Dorsolateral prefrontal cortex (tissue), 120 donors: ENCODE measurements at regions of chr2 and their contacts with region 1.

Region 1: DNA sequence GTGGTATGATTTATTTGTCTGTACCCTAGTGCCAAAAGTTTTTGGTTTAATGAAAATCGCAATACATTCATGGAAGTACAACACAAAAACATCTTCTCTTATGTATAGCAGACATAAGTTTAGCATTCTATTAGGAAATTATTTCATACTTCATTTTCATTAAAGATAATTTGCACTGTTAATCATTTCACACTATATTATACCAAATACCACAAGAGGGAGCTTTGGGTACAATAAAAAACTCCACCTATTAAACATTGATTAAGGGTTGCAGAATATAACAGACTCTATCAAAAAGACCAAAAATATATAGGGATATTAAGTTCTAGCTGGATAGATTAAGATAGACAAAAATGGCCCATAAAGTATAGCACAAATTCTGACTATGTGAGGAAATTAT is 79.0 kb downstream of the SLC66A3 start:
- DNase-seq: no peak
- H3K4me3 ChIP-seq: no peak overlapping the region
- H3K27ac ChIP-seq: no peak overlapping the region
- H3K27me3 ChIP-seq: no peaks in the 10 kb centered on the region
- CTCF ChIP-seq: peak; percentile 51 to 88 (median 67)

Region 2: GRCh38 chr2:11129598-11130449 is 104.5 kb before region 1 on chr2:
- intact Hi-C with region 1: loop called in 1 of 2 experiments (anchors 5 kb)
- DNase-seq: peak in 3 of 10 donors; percentile 48 to 65 (median 50)
- H3K4me3 ChIP-seq: peak overlapping the region in 58 of 59 donors; percentile 13 to 71 (median 51)
- H3K27ac ChIP-seq: peak overlapping the region in 32 of 59 donors; percentile 2 to 81 (median 38)
- H3K27me3 ChIP-seq: peaks cover 0 to 8% (median 0%) of the 10 kb centered on the region in 45 donors
- CTCF ChIP-seq: peak in 28 of 56 donors; percentile 6 to 50 (median 25)

Region 3: DNA sequence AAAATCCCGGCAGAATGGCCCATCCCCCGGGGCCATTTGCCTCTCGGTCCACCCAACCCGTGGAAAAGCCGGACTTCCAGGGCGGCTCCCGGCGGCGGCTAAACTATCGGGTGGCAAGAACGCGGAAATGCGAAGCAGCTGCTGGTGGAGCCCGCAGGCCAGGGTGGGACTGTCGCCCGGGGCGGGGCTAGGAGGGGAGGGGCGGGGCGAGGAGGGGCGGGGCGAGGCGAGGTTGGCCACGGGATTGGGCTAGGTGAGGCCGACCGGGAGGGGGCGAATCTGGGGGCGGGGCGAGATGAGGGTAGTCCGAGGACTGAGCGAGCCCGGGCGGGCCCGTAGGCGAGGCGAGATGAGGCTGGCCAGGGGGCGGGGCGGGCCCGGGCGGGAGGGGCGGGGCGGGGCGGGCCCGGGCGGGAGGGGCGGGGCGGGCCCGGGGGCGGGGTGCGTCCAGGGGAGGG is 79.4 kb before region 1 on chr2:
- intact Hi-C with region 1: no loop called
- DNase-seq: peak; percentile 88 to 96 (median 93)
- H3K4me3 ChIP-seq: peak overlapping the region; percentile 19 to 99 (median 88)
- H3K27ac ChIP-seq: peak overlapping the region in 56 of 59 donors; percentile 22 to 94 (median 85)
- H3K27me3 ChIP-seq: no peaks in the 10 kb centered on the region
- CTCF ChIP-seq: no peak

Region 4: DNA sequence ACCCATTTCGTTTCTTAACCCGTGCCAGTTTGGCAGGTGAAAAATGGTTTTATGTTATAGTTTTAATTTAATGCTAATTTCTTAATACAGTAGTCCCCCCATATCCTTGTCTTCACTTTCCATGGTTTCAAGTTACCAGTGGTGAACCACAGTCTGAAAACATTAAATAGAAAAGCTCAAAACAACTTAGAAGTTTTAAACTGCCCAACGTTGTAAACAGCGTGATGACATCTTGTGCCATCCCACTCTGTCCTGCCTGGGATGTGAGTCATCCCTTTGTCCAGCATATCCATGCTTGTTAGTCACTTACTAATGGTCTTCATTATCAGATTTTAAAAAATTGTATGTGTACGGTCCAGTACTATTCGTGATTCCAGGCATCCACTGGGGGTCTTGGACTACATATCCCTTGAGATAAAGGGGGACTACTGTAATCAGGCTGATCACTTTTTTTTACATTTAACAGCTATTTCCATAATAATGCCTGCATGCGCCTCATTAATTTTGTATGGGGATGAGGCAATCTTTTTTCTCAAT is 47.2 kb before region 1 on chr2:
- intact Hi-C with region 1: no loop called
- DNase-seq: no peak
- H3K4me3 ChIP-seq: no peak overlapping the region
- H3K27ac ChIP-seq: no peak overlapping the region
- H3K27me3 ChIP-seq: no peaks in the 10 kb centered on the region
- CTCF ChIP-seq: no peak

Region 5: DNA sequence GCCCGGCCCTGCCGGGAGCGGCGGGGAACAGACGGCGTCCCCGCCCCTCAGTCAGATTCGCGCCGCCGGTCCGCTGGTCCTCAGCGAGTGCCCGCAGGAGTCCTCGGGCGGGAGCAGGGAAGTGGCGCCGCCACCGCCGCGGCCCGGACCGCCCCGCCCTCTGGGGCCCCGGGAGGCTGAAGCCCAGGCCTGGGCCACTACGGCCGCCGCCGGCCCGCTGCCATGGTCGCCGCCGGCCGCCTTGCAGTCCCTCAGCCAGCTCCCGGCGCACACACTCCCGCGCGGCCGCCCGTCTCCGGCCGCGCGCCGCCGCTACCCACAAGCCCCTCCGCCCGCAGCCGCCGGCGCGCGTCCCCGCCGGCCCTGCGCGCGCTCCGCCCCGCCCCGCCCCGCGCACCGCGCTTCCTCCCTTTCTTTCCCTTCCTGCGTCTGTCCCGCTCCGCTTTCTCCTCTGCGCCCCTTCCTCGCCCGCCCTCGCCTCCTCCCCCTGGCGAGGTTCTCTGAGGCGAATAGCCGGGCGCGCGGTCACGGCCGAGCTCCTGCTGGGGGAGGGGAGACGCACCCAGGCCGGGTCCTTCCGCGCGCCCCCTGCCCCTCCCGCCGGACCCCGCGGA is 110.1 kb after region 1 on chr2 and contains the start of gene ROCK2:
- intact Hi-C with region 1: loop called in 1 of 2 experiments (anchors 10 kb)
- DNase-seq: peak; percentile 63 to 88 (median 81)
- H3K4me3 ChIP-seq: peak within 1 kb of the TSS; percentile 76 to 100 (median 93)
- H3K27ac ChIP-seq: peak within 1 kb of the TSS; percentile 86 to 99 (median 97)
- H3K27me3 ChIP-seq: no peaks in the 10 kb centered on the region
- CTCF ChIP-seq: peak in 1 of 56 donors; percentile 6
- total RNA-seq, gene ROCK2: 42.2 to 120 (median 82.5) TPM

Region 6: DNA sequence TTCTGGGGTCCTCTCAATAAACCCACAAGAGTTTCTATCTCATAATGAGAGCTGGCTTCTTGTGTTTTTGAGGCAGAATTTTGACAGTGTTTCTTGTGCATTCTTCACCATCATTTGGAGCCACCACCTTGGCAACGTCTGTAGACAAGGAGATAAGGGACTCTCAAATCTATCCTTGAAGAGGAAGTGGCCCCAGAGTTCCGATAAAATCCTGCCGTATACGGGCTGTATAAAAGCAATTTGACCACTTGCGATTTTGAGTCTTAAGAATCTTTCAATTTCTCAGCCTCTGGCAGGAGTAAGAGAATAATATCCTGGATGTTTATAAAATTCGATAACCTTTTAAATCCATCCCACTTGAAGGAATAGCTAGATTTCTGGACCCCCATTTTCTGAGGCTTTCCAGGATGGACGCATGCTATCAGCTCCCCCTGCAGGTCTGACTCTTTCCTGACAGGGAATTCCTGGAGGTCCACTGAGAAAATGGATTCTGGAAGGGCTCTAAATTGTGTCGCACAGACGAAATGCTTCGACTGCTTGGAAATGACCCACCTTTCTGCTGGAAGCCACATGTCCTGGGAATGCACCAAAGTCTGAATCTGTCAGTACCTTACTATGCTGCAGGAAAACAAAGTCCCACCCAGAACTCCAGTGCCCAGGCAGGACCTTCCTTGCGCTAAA is 177.6 kb after region 1 on chr2:
- intact Hi-C with region 1: loop called (anchors 2 to 10 kb)
- DNase-seq: peak in 4 of 10 donors; percentile 32 to 64 (median 52)
- H3K4me3 ChIP-seq: peak overlapping the region in 55 of 59 donors; percentile 1 to 62 (median 39)
- H3K27ac ChIP-seq: peak overlapping the region in 1 of 59 donors; percentile 36
- H3K27me3 ChIP-seq: no peaks in the 10 kb centered on the region
- CTCF ChIP-seq: peak; percentile 64 to 93 (median 83)

Region 7: GRCh38 chr2:11446733-11447248 is 212.5 kb after region 1 on chr2:
- intact Hi-C with region 1: loop called in 1 of 2 experiments (anchors 10 kb)
- DNase-seq: peak in 8 of 10 donors; percentile 46 to 70 (median 53)
- H3K4me3 ChIP-seq: no peak overlapping the region
- H3K27ac ChIP-seq: peak overlapping the region in 25 of 59 donors; percentile 4 to 60 (median 46)
- H3K27me3 ChIP-seq: no peaks in the 10 kb centered on the region
- CTCF ChIP-seq: peak; percentile 57 to 90 (median 83)

Region 8: DNA sequence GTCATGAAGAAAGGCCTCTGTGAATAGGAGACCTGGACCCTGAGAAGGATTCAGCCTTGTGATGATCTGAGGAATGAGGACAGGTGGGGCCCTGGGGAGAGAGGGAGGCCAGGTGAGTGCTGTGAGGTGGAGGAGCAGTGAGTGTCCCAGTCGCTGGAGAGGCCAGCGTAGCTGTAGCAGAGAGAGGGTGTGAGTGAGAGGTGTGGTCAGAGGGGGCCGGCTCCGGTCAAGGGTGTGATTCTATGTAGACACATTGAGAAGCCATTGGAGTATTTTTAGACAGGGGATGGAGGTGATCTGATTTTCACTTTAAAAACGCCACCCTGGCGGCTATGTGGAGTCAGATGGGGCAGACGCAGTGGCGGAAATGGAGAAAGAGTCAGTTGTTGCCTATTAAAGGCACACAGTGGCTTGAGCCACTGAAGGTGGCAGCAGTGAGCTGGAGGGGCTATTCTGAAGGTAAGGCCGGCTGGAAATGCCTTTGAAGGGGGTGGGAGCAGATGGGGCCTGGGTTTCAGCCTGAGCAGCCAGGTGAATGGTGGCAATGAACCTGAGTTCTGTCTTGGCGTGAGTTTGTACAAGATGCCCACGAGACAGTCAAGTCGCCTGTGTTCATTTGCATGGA is 355.1 kb after region 1 on chr2:
- intact Hi-C with region 1: loop called in 1 of 2 experiments (anchors 5 kb)
- DNase-seq: no peak
- H3K4me3 ChIP-seq: no peak overlapping the region
- H3K27ac ChIP-seq: no peak overlapping the region
- H3K27me3 ChIP-seq: no peaks in the 10 kb centered on the region
- CTCF ChIP-seq: peak in 1 of 56 donors; percentile 9